ENCODE measurements at regions of chr1 and their contacts with region 1.

Region 1: DNA sequence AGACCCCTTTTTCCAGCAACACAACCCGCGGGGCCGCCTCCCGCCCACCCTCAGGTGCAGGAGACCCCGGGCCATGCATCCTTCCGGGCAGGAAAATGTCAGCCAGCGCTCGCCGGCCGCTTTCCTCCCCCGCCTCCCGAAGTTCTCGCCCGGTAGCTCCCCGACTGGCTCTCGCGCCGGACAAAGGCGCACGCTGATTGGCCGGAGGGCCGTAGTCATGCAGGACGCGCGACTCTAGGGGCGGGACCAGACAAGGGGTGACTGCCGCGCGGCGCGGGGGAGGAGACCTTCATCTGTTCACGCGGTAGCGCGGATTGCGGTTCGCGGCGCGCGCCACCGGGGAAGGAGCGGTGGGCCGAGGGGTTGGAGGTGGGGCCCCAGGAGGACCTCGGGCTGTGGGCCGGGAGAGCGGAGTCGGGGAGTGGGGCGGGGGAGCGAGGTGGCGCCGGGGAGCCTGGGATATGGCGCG is at the start of gene FLVCR1:
- DNase-seq: peak; percentile 98
- ATAC-seq: peak; percentile 92
- H3K4me3 ChIP-seq: peak within 1 kb of the TSS; percentile 92
- H3K27ac ChIP-seq: peak within 1 kb of the TSS; percentile 37
- H3K4me1 ChIP-seq: peaks cover 31% of the 10 kb centered on the region
- H3K27me3 ChIP-seq: no peaks in the 10 kb centered on the region
- CTCF ChIP-seq: no peak
- total RNA-seq, gene FLVCR1: 13.9 and 15.4 TPM in 2 replicates

Region 2: GRCh38 chr1:211724687-211725196 is 1133.3 kb before region 1 on chr1:
- CTCF ChIA-PET with region 1: no interaction called
- POLR2A ChIA-PET with region 1: interaction called, 12 read pairs
- intact Hi-C with region 1: no loop called
- DNase-seq: no peak
- ATAC-seq: no peak
- H3K4me3 ChIP-seq: no peak overlapping the region
- H3K27ac ChIP-seq: no peak overlapping the region
- H3K4me1 ChIP-seq: no peaks in the 10 kb centered on the region
- H3K27me3 ChIP-seq: no peaks in the 10 kb centered on the region
- CTCF ChIP-seq: no peak

Region 3: DNA sequence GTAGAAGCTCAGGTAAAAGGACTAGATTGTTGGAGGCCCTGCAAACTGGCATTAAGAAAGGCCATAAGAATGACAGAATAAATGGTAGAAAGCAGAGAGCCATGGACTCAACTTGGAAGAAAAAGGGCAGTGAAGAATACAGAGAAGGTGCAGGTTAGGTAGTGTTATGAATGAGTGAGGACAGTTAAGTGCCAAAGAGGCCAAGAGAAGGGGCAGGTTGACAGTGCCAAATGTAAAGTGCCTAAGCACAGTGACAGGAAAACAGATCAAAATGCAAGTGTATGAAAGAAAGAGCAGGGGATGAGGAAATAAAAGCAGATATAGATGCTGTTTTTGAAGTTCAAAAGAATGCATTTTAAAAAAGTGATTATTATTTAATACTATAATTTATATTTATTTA is 866.3 kb before region 1 on chr1:
- CTCF ChIA-PET with region 1: no interaction called
- POLR2A ChIA-PET with region 1: no interaction called
- intact Hi-C with region 1: no loop called
- DNase-seq: no peak
- ATAC-seq: no peak
- H3K4me3 ChIP-seq: no peak overlapping the region
- H3K27ac ChIP-seq: no peak overlapping the region
- H3K4me1 ChIP-seq: no peaks in the 10 kb centered on the region
- H3K27me3 ChIP-seq: no peaks in the 10 kb centered on the region
- CTCF ChIP-seq: no peak

Region 4: GRCh38 chr1:212665241-212666115 is 192.5 kb before region 1 on chr1:
- CTCF ChIA-PET with region 1: no interaction called
- POLR2A ChIA-PET with region 1: interaction called, 3 read pairs
- intact Hi-C with region 1: loop called (anchors 5 kb)
- DNase-seq: peak; percentile 95
- ATAC-seq: peak; percentile 88
- H3K4me3 ChIP-seq: peak overlapping the region; percentile 72
- H3K27ac ChIP-seq: no peak overlapping the region; the same call in 1 of the 2 replicates
- H3K4me1 ChIP-seq: peaks cover 35% of the 10 kb centered on the region
- H3K27me3 ChIP-seq: no peaks in the 10 kb centered on the region
- CTCF ChIP-seq: peak; percentile 99

Region 5: GRCh38 chr1:212816567-212817278 is 41.3 kb before region 1 on chr1:
- CTCF ChIA-PET with region 1: no interaction called
- POLR2A ChIA-PET with region 1: no interaction called
- intact Hi-C with region 1: loop called (anchors 2 kb)
- DNase-seq: peak; percentile 33
- ATAC-seq: peak; percentile 79
- H3K4me3 ChIP-seq: no peak overlapping the region
- H3K27ac ChIP-seq: no peak overlapping the region
- H3K4me1 ChIP-seq: peaks cover 11% of the 10 kb centered on the region
- H3K27me3 ChIP-seq: no peaks in the 10 kb centered on the region
- CTCF ChIP-seq: no peak

Region 6: DNA sequence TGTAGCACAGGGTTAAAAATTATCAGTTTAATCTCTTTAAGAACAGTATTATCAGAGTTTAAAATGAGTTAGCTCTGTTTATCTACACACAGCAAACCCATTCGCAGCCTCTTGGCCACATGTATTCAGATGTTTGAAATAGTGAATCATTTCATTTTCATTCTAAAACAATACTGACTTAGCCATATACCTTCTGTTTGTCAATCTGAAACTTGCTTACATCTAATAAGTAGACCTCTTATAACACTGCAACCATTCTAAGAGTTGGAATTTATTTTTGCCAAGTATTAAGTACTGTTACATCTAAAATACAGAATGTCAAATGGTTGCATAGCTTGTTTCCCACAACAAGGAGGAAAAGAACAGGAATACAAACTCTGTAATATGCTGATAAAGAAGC is 132.2 kb after region 1 on chr1:
- CTCF ChIA-PET with region 1: no interaction called
- POLR2A ChIA-PET with region 1: no interaction called
- intact Hi-C with region 1: loop called (anchors 1 kb)
- DNase-seq: no peak
- ATAC-seq: no peak
- H3K4me3 ChIP-seq: no peak overlapping the region
- H3K27ac ChIP-seq: no peak overlapping the region
- H3K4me1 ChIP-seq: peaks cover 12% of the 10 kb centered on the region
- H3K27me3 ChIP-seq: no peaks in the 10 kb centered on the region
- CTCF ChIP-seq: no peak

Region 7: GRCh38 chr1:213070406-213070805 is 212.4 kb after region 1 on chr1:
- CTCF ChIA-PET with region 1: no interaction called
- POLR2A ChIA-PET with region 1: no interaction called
- intact Hi-C with region 1: loop called (anchors 5 kb)
- DNase-seq: peak; percentile 75
- ATAC-seq: peak; percentile 96
- H3K4me3 ChIP-seq: no peak overlapping the region
- H3K27ac ChIP-seq: no peak overlapping the region
- H3K4me1 ChIP-seq: peaks cover 4% of the 10 kb centered on the region; the same call in 1 of the 2 replicates
- H3K27me3 ChIP-seq: no peaks in the 10 kb centered on the region
- CTCF ChIP-seq: peak; percentile 61